CD14-positive monocyte (primary cell): ENCODE measurements at regions of chr1 and their contacts with region 1.

Region 1: GRCh38 chr1:87953732-87954344 is 625.2 kb downstream of the LMO4 start:
- DNase-seq: peak; percentile 46 to 56 (median 55)
- H3K4me3 ChIP-seq: no peak overlapping the region
- H3K4me3 Mint-ChIP-seq: no peak overlapping the region
- H3K27ac ChIP-seq: no peak overlapping the region
- H3K27ac Mint-ChIP-seq: no peak overlapping the region
- H3K4me1 ChIP-seq: peaks cover 0 to 2% of the 10 kb centered on the region in 2 donors
- H3K4me1 Mint-ChIP-seq: peaks cover 13% of the 10 kb centered on the region
- H3K27me3 ChIP-seq: no peaks in the 10 kb centered on the region
- H3K27me3 Mint-ChIP-seq: peaks cover 0 to 7% (median 0%) of the 10 kb centered on the region in 3 donors
- CTCF ChIP-seq: peak; percentile 87

Region 2: GRCh38 chr1:87131809-87132283 is 822.0 kb before region 1 on chr1:
- intact Hi-C with region 1: loop called (anchors 5 to 10 kb)
- DNase-seq: peak; percentile 67 to 77 (median 74)
- H3K4me3 ChIP-seq: peak overlapping the region; percentile 70 to 89 (median 86)
- H3K4me3 Mint-ChIP-seq: peak overlapping the region; percentile 93 to 95
- H3K27ac ChIP-seq: peak overlapping the region in 1 of 2 donors; percentile 58
- H3K27ac Mint-ChIP-seq: peak overlapping the region in 3 of 7 donors; percentile 27 to 57 (median 30)
- H3K4me1 ChIP-seq: peaks cover 6 to 11% of the 10 kb centered on the region in 2 donors
- H3K4me1 Mint-ChIP-seq: peaks cover 20% of the 10 kb centered on the region
- H3K27me3 ChIP-seq: peaks cover 0 to 4% of the 10 kb centered on the region in 2 donors
- H3K27me3 Mint-ChIP-seq: peaks cover 2 to 6% (median 3%) of the 10 kb centered on the region in 3 donors
- CTCF ChIP-seq: peak; percentile 92

Region 3: DNA sequence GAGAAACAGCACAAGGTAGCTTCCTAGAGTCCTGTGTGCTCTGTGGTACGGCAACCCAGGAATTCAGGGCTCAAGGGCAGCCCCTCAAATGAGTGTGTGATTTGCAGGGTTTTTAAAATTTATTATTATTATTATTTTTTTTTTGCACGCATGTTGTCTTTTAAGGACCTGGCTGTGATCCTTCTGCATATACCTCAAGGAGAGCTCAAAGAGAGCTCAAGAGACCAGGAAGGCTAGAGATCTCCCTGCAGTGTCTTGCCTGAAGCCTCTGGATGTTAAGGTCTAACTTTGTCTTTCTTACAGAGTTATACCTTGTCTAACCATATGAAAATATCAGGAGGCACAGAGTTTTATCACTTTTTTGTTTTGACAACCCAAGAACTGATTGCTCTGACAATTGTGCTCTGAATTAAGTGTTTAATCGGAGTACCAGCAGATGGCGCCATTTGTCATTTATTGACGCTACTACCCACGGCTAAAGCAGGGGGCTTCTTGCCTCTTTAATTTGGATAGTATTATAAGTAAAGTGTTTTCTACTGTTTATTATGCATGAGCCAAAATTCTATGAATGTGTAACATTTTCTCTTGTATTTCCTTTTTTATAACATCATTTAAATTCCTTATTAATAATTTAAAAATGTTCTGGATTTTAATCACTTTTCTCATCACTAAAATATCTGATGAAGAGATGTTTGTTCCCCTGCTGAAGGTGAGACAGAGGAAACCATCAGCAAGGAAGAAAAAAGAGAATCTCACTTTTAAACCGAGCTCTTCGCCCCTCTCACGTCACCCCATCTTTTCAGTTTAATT is 660.9 kb before region 1 on chr1:
- intact Hi-C with region 1: loop called (anchors 5 kb)
- DNase-seq: peak; percentile 45 to 76 (median 65)
- H3K4me3 ChIP-seq: no peak overlapping the region
- H3K4me3 Mint-ChIP-seq: no peak overlapping the region
- H3K27ac ChIP-seq: no peak overlapping the region
- H3K27ac Mint-ChIP-seq: no peak overlapping the region
- H3K4me1 ChIP-seq: peaks cover 15 to 19% of the 10 kb centered on the region in 2 donors
- H3K4me1 Mint-ChIP-seq: peaks cover 17% of the 10 kb centered on the region
- H3K27me3 ChIP-seq: no peaks in the 10 kb centered on the region
- H3K27me3 Mint-ChIP-seq: peaks cover 1 to 4% (median 2%) of the 10 kb centered on the region in 3 donors
- CTCF ChIP-seq: peak; percentile 95